ENCODE measurements at regions of chr1 and their contacts with region 1.

Region 1: GRCh38 chr1:24502709-24503058 is at the start of gene RCAN3:
- DNase-seq: peak; percentile 78 to 93 (median 90)
- H3K4me3 ChIP-seq: peak within 1 kb of the TSS; percentile 93
- H3K4me3 Mint-ChIP-seq: peak within 1 kb of the TSS; percentile 93 to 99 (median 98)
- H3K27ac ChIP-seq: peak within 1 kb of the TSS; percentile 82
- H3K27ac Mint-ChIP-seq: peak within 1 kb of the TSS; percentile 96 to 100 (median 98)
- H3K4me1 ChIP-seq: peaks cover 52% of the 10 kb centered on the region
- H3K4me1 Mint-ChIP-seq: peaks cover 75 to 83% (median 81%) of the 10 kb centered on the region in 3 donors
- H3K27me3 ChIP-seq: no peaks in the 10 kb centered on the region
- H3K27me3 Mint-ChIP-seq: peaks cover 0 to 9% of the 10 kb centered on the region in 2 donors
- total RNA-seq, gene RCAN3: 62.6 to 64.0 TPM

Region 2: DNA sequence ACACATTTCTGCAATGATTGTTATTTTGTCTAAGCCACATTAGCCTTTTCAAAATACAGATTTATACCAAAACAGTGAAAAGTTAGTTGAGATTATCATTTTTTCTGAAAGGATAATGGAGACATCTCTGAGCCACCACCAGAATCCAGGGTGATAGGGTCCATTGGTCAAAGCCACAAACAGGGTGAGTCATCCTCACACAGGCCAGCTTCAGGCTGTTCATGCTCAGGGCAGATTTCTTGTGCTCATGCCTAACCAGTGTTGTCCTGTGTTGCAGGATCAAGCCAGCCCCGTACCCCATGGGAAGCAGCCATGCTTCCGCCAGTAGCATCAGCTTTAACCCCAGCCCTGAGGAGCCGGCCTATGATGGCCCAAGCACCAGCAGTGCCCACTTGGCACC is 746.0 kb before region 1 on chr1:
- CTCF ChIA-PET with region 1: no interaction called
- POLR2A ChIA-PET with region 1: interaction called, 14 read pairs
- DNase-seq: no peak
- H3K4me3 ChIP-seq: no peak overlapping the region
- H3K4me3 Mint-ChIP-seq: no peak overlapping the region
- H3K27ac ChIP-seq: no peak overlapping the region
- H3K27ac Mint-ChIP-seq: peak overlapping the region in 1 of 8 donors; percentile 37
- H3K4me1 ChIP-seq: no peaks in the 10 kb centered on the region
- H3K4me1 Mint-ChIP-seq: peaks cover 0 to 11% (median 5%) of the 10 kb centered on the region in 3 donors
- H3K27me3 ChIP-seq: no peaks in the 10 kb centered on the region
- H3K27me3 Mint-ChIP-seq: no peaks in the 10 kb centered on the region

Region 3: DNA sequence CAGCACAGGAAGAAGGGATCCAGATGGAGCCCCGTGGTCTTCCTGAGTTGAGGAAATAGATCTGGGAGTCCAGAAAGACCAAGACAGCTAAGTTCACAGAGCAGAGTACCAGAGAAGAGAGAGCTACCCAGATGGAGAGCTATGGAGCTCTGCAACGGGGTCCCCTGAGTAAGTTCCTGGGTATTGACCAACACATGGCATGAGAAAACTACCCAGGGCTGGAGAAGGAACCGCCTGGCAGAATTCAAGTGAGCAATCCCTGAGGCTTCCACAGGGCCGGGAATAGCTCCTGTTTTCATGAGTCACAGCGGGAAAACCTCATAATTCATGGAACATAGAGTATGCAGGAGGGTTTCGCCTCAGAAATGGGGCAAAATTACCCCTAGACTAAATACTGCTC is 108.8 kb before region 1 on chr1:
- CTCF ChIA-PET with region 1: no interaction called
- POLR2A ChIA-PET with region 1: no interaction called
- DNase-seq: no peak
- H3K4me3 ChIP-seq: no peak overlapping the region
- H3K4me3 Mint-ChIP-seq: no peak overlapping the region
- H3K27ac ChIP-seq: no peak overlapping the region
- H3K27ac Mint-ChIP-seq: peak overlapping the region in 4 of 8 donors; percentile 19 to 95 (median 80)
- H3K4me1 ChIP-seq: peaks cover 33% of the 10 kb centered on the region
- H3K4me1 Mint-ChIP-seq: peaks cover 23 to 27% (median 25%) of the 10 kb centered on the region in 3 donors
- H3K27me3 ChIP-seq: no peaks in the 10 kb centered on the region
- H3K27me3 Mint-ChIP-seq: peaks cover 0 to 2% of the 10 kb centered on the region in 2 donors

Region 4: GRCh38 chr1:24415334-24415909 is 87.3 kb before region 1 on chr1 and contains the start of gene NIPAL3:
- CTCF ChIA-PET with region 1: interaction called, 26 read pairs
- POLR2A ChIA-PET with region 1: interaction called, 43 read pairs
- DNase-seq: peak; percentile 95 to 99 (median 96)
- H3K4me3 ChIP-seq: peak within 1 kb of the TSS; percentile 73
- H3K4me3 Mint-ChIP-seq: peak within 1 kb of the TSS; percentile 91 to 100 (median 97)
- H3K27ac ChIP-seq: peak within 1 kb of the TSS; percentile 27
- H3K27ac Mint-ChIP-seq: peak within 1 kb of the TSS; percentile 46 to 97 (median 92)
- H3K4me1 ChIP-seq: peaks cover 52% of the 10 kb centered on the region
- H3K4me1 Mint-ChIP-seq: peaks cover 51 to 77% (median 75%) of the 10 kb centered on the region in 3 donors
- H3K27me3 ChIP-seq: no peaks in the 10 kb centered on the region
- H3K27me3 Mint-ChIP-seq: no peaks in the 10 kb centered on the region
- total RNA-seq, gene NIPAL3: 31.3 to 33.2 TPM

Region 5: DNA sequence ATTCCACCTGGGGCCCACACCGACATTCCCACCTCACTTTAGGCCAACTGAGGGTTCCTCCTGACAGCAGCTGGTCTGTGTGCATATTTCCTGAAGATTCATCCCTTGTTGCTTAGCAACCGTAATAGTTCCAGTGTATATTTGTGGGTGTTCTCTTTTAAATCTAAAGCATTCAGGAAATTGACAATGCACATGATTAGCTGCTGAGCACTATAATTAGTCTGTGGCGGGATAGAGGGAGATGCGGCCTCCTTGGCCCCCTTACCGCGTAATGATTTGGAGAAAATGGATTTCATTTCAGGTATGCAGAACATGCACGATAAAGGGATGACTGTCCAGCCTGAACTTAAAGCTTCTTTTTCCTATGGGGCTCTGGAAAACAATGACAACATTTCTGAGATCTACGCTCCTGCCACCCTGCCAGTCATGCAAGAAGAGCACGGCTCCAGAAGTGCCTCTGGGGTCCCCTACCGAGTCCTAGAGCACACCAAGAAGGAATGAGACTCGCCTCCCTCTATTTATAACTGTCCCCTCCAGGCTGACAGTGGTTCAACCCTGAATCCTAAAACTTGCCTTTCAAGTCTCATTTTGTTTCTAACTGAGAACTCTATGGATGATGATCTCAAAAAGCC is 33.9 kb before region 1 on chr1:
- CTCF ChIA-PET with region 1: no interaction called
- POLR2A ChIA-PET with region 1: no interaction called
- DNase-seq: no peak
- H3K4me3 ChIP-seq: no peak overlapping the region
- H3K4me3 Mint-ChIP-seq: no peak overlapping the region
- H3K27ac ChIP-seq: no peak overlapping the region
- H3K27ac Mint-ChIP-seq: peak overlapping the region in 4 of 8 donors; percentile 27 to 76 (median 44)
- H3K4me1 ChIP-seq: peaks cover 14% of the 10 kb centered on the region
- H3K4me1 Mint-ChIP-seq: peaks cover 10 to 20% (median 17%) of the 10 kb centered on the region in 3 donors
- H3K27me3 ChIP-seq: no peaks in the 10 kb centered on the region
- H3K27me3 Mint-ChIP-seq: no peaks in the 10 kb centered on the region

Region 6: DNA sequence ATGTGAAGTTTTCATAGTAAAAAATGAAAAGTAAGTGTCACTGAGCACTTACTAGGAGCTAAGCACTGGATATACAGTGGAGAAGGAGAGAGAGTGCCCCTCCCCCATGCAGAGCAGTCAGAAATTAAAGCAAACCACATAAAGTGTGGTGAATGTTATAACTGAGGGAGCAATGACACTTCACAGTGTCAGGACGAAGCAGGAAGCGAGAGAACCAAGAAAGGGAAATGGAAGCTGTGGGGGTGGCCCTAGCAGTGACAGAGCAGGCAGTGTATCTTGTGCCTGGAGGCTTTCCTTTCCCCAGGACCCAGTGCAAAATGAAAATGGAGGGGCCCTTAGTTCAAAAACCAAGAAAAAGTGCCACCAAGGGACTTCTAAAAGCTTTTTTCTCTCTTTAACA is 21.6 kb before region 1 on chr1:
- CTCF ChIA-PET with region 1: interaction called, 26 read pairs
- POLR2A ChIA-PET with region 1: interaction called, 46 read pairs
- DNase-seq: peak; percentile 6 to 77 (median 52)
- H3K4me3 ChIP-seq: peak overlapping the region; percentile 32
- H3K4me3 Mint-ChIP-seq: peak overlapping the region; percentile 44 to 84 (median 83)
- H3K27ac ChIP-seq: peak overlapping the region; percentile 32
- H3K27ac Mint-ChIP-seq: peak overlapping the region; percentile 94 to 99 (median 98)
- H3K4me1 ChIP-seq: peaks cover 64% of the 10 kb centered on the region
- H3K4me1 Mint-ChIP-seq: peaks cover 50 to 65% (median 51%) of the 10 kb centered on the region in 3 donors
- H3K27me3 ChIP-seq: no peaks in the 10 kb centered on the region
- H3K27me3 Mint-ChIP-seq: peaks cover 0 to 2% of the 10 kb centered on the region in 2 donors

Region 7: DNA sequence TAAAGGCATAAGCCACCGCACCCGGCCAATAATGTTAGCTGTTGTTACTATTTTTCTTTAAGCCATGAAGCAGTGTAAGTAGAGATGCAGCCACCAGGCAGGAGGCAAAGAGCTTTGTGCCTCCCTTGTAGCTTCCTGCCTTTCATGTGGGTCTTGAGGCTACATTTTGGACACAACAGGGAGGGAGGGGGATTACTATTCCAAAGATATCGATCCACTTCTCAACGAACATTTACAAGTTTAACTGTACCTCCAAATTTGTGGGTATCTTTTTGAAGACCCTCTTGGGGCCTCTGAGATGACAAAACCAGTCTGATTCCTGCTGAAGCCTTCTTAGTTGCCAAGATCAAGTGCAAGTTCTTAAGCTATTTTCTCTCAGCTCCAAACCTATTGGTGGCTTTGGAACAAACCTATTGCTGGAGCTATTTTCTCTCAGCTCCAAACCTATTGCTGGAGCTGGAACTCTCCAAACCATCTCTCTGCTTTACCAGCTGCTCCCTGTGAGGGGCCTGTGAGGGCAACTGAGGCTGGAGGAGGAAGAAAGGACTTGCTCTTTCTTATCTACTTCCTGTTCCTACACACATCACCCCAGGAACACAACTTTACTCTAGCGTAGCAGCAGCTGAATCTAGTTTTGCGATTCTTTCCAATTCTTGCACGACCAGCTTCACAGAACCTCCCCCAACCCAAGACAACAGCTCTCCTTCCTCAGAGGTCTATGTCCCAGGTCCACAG is 16.2 kb before region 1 on chr1:
- CTCF ChIA-PET with region 1: interaction called, 26 read pairs
- POLR2A ChIA-PET with region 1: interaction called, 46 read pairs
- DNase-seq: peak; percentile 8 to 80 (median 55)
- H3K4me3 ChIP-seq: peak overlapping the region; percentile 51
- H3K4me3 Mint-ChIP-seq: peak overlapping the region; percentile 24 to 77 (median 72)
- H3K27ac ChIP-seq: peak overlapping the region; percentile 45
- H3K27ac Mint-ChIP-seq: peak overlapping the region; percentile 58 to 94 (median 80)
- H3K4me1 ChIP-seq: peaks cover 81% of the 10 kb centered on the region
- H3K4me1 Mint-ChIP-seq: peaks cover 50 to 73% (median 65%) of the 10 kb centered on the region in 3 donors
- H3K27me3 ChIP-seq: no peaks in the 10 kb centered on the region
- H3K27me3 Mint-ChIP-seq: peaks cover 0 to 2% of the 10 kb centered on the region in 2 donors

Region 8: GRCh38 chr1:24526940-24527542 is 24.4 kb after region 1 on chr1:
- CTCF ChIA-PET with region 1: interaction called, 24 read pairs
- POLR2A ChIA-PET with region 1: interaction called, 7 read pairs
- DNase-seq: peak; percentile 8 to 54 (median 34)
- H3K4me3 ChIP-seq: no peak overlapping the region
- H3K4me3 Mint-ChIP-seq: no peak overlapping the region
- H3K27ac ChIP-seq: no peak overlapping the region
- H3K27ac Mint-ChIP-seq: peak overlapping the region in 6 of 8 donors; percentile 61 to 93 (median 74)
- H3K4me1 ChIP-seq: peaks cover 40% of the 10 kb centered on the region
- H3K4me1 Mint-ChIP-seq: peaks cover 32 to 72% (median 62%) of the 10 kb centered on the region in 3 donors
- H3K27me3 ChIP-seq: no peaks in the 10 kb centered on the region
- H3K27me3 Mint-ChIP-seq: no peaks in the 10 kb centered on the region

Region 9: DNA sequence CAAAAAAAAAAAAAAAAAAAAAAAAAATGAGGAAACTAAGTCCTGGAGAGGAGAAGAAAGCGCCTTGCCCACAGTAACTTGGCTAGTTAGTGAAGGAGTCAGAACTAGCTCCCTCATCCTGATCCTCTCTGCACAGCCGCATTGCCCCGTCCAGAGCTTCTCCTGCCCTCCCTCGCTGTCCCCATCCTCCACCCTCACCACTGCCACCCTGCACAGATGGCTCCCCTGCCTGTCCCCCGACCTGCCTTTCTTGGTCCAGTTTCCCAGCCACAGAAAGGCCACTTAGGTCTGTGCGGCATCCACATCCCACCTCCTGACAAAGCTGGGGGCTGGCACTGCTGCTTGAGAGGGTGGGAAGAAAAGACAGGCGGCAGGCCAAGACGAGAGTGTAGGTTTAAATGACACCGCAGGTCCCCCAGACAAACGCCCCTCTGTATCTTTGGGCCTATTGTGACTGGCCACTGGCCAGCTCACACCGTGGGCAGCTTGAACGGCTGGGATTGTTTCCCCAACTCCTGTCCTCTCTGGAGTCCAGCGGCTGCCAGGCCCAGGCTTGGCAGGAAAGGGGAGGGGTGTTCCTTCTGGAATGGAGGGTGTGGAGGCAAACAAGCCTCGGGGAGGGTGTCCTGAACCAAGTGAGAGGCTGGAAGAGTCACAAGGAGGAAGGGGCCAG is 73.4 kb after region 1 on chr1:
- CTCF ChIA-PET with region 1: no interaction called
- POLR2A ChIA-PET with region 1: no interaction called
- DNase-seq: no peak
- H3K4me3 ChIP-seq: no peak overlapping the region
- H3K4me3 Mint-ChIP-seq: no peak overlapping the region
- H3K27ac ChIP-seq: no peak overlapping the region
- H3K27ac Mint-ChIP-seq: peak overlapping the region in 1 of 8 donors; percentile 93
- H3K4me1 ChIP-seq: no peaks in the 10 kb centered on the region
- H3K4me1 Mint-ChIP-seq: peaks cover 6 to 10% (median 9%) of the 10 kb centered on the region in 3 donors
- H3K27me3 ChIP-seq: no peaks in the 10 kb centered on the region
- H3K27me3 Mint-ChIP-seq: peaks cover 0 to 3% of the 10 kb centered on the region in 2 donors

Region 10: DNA sequence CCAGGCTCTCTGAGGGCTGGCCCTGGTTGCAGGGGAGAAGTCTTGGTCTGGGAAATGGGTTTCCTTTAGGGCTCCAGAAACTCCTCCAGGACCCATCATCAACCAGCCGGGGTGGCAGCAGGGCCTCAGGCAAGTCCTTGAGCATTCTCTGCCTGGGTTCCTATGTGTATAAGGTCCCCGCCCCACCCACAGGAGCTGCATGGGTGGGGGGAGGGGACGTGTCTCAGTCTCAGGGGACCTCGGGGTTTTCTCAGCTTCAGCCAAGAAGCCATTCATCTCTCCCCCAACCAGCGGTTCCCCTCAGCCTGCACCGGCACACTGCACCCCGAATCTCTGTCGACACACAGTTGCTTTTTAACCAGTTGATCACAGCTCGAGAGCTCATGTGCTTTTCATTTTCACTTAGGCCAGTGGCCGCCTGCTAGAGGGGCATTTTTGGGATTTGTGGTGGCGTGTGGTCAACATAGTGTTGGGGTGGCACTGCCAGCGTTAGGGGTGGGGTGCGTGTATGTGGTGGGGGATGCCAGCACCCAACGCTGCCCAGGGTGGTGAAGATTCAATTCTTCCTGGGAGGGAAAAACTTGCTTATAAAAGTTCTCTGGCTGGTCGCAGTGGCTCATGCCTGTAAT is 420.9 kb after region 1 on chr1:
- CTCF ChIA-PET with region 1: no interaction called
- POLR2A ChIA-PET with region 1: interaction called, 10 read pairs
- DNase-seq: peak in 2 of 5 donors; percentile 57 to 61
- H3K4me3 ChIP-seq: peak overlapping the region; percentile 25
- H3K4me3 Mint-ChIP-seq: peak overlapping the region; percentile 79 to 99 (median 91)
- H3K27ac ChIP-seq: peak overlapping the region; percentile 64
- H3K27ac Mint-ChIP-seq: peak overlapping the region; percentile 85 to 100 (median 100)
- H3K4me1 ChIP-seq: peaks cover 91% of the 10 kb centered on the region
- H3K4me1 Mint-ChIP-seq: peaks cover 70 to 87% (median 87%) of the 10 kb centered on the region in 3 donors
- H3K27me3 ChIP-seq: no peaks in the 10 kb centered on the region
- H3K27me3 Mint-ChIP-seq: peaks cover 0 to 11% of the 10 kb centered on the region in 2 donors